ENCODE measurements at regions of chr15 and their contacts with region 1.

Region 1: DNA sequence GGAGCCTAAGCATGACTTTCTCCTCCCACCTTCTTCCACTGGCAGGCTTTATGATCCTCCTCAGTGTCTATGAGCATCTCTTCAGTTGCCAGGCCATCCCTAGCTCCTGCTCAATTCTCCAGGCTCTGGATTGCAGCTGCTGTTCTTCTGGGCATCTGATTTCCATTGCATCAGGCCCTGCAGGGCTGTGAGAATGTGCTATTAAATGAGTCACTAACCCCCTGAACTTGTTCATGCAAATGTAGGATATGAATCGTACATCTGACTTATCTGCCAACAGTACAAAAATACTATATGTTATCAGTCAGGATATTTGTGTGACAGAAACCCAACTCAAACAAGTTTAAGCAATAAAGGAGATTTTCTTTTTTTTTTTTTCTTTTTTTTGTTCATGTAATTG is 11.9 kb downstream of the GPR176 start:
- DNase-seq: no peak
- H3K4me3 ChIP-seq: no peak overlapping the region
- H3K27ac ChIP-seq: no peak overlapping the region
- H3K4me1 ChIP-seq: peaks cover 17 to 42% (median 40%) of the 10 kb centered on the region in 4 experiments
- H3K27me3 ChIP-seq: no peaks in the 10 kb centered on the region
- CTCF ChIP-seq: no peak
- EP300 ChIP-seq: no peak
- POLR2A ChIP-seq: no peak; a peak in 1 of 3 replicates
- RAD21 ChIP-seq: no peak

Region 2: GRCh38 chr15:39896846-39897245 is 11.3 kb before region 1 on chr15:
- CTCF ChIA-PET with region 1: interaction called, 7 read pairs
- POLR2A ChIA-PET with region 1: interaction called, 12 read pairs
- DNase-seq: no peak
- H3K4me3 ChIP-seq: no peak overlapping the region
- H3K27ac ChIP-seq: no peak overlapping the region
- H3K4me1 ChIP-seq: peaks cover 2 to 19% (median 12%) of the 10 kb centered on the region in 4 experiments
- H3K27me3 ChIP-seq: no peaks in the 10 kb centered on the region
- CTCF ChIP-seq: no peak
- EP300 ChIP-seq: no peak
- POLR2A ChIP-seq: no peak
- RAD21 ChIP-seq: no peak

Region 3: GRCh38 chr15:39920510-39921273 is 12.5 kb after region 1 on chr15:
- CTCF ChIA-PET with region 1: interaction called, 7 read pairs
- POLR2A ChIA-PET with region 1: interaction called, 27 read pairs
- DNase-seq: peak in 1 of 2 experiments; percentile 86
- H3K4me3 ChIP-seq: peak overlapping the region; percentile 91 to 95 (median 94)
- H3K27ac ChIP-seq: peak overlapping the region; percentile 69
- H3K4me1 ChIP-seq: peaks cover 5 to 15% (median 8%) of the 10 kb centered on the region in 4 experiments; a peak in 6 of 7 replicates
- H3K27me3 ChIP-seq: no peaks in the 10 kb centered on the region
- CTCF ChIP-seq: peak in 2 of 3 experiments; percentile 23 to 29; a peak in 3 of 4 replicates
- EP300 ChIP-seq: no peak
- POLR2A ChIP-seq: peak; percentile 61 to 64
- RAD21 ChIP-seq: no peak; a peak in 1 of 4 replicates

Measured in H1 (cell line).